CD4-positive, alpha-beta T cell (primary cell): ENCODE measurements at regions of chr15 and their contacts with region 1.

Region 1: DNA sequence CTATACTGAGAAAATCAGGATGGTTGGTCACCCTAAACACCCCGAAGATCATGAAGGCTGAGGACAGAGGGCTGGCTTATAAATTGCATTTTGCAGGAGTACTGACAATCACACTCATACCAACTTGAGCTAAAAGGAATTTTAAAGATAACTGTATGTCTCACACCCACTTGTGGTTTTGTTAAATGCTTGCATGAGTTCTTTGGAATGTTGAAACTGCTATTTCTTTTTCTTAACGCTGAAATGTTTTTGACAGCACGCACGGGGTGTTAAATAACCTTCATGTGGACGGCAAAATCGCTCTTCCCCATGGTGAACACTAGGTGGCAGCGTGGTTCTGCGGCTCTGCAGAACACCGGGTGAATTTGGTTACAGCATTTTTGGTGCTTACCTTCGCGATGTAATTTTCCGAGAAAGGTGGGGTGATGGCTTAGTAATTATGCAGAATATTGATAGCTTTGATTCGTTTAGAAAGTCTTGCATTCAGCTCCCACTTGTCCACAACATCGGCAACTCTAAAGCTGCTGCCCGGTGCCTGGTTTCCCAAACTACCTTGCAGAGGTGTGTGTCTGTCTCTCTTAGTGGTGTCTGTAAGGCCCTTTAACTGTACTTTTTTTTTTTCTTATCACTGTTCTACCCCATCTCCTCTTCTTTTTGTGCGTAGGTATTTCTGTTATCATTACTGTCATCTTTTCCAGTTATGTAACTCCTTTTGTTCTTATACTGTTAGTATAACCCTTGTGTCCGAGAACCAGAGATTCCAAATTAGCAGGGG is 51.7 kb downstream of the ARNT2 start:
- DNase-seq: peak; percentile 17 to 81 (median 31)
- ATAC-seq: peak; percentile 64
- H3K4me3 ChIP-seq: no peak overlapping the region
- H3K4me3 Mint-ChIP-seq: no peak overlapping the region
- H3K27ac ChIP-seq: no peak overlapping the region
- H3K27ac Mint-ChIP-seq: no peak overlapping the region
- H3K4me1 ChIP-seq: peaks cover 2% of the 10 kb centered on the region
- H3K4me1 Mint-ChIP-seq: peaks cover 7% of the 10 kb centered on the region
- H3K27me3 ChIP-seq: peaks cover 0 to 11% of the 10 kb centered on the region in 2 experiments
- H3K27me3 Mint-ChIP-seq: peaks cover 23% of the 10 kb centered on the region
- CTCF ChIP-seq: peak; percentile 83

Region 2: GRCh38 chr15:80776420-80777045 is 320.7 kb after region 1 on chr15:
- CTCF ChIA-PET with region 1: interaction called, 11 read pairs
- POLR2A ChIA-PET with region 1: no interaction called
- intact Hi-C with region 1: loop called (anchors 1 kb)
- DNase-seq: peak; percentile 16 to 78 (median 41)
- ATAC-seq: no peak
- H3K4me3 ChIP-seq: no peak overlapping the region
- H3K4me3 Mint-ChIP-seq: no peak overlapping the region
- H3K27ac ChIP-seq: no peak overlapping the region
- H3K27ac Mint-ChIP-seq: no peak overlapping the region
- H3K4me1 ChIP-seq: peaks cover 16% of the 10 kb centered on the region
- H3K4me1 Mint-ChIP-seq: no peaks in the 10 kb centered on the region
- H3K27me3 ChIP-seq: peaks cover 31 to 47% of the 10 kb centered on the region in 2 experiments
- H3K27me3 Mint-ChIP-seq: peaks cover 52% of the 10 kb centered on the region
- CTCF ChIP-seq: peak; percentile 75

Region 3: GRCh38 chr15:80970018-80970658 is 514.3 kb after region 1 on chr15:
- CTCF ChIA-PET with region 1: interaction called, 11 read pairs
- POLR2A ChIA-PET with region 1: no interaction called
- intact Hi-C with region 1: loop called (anchors 1 kb)
- DNase-seq: peak; percentile 32 to 81 (median 48)
- ATAC-seq: peak; percentile 69
- H3K4me3 ChIP-seq: no peak overlapping the region
- H3K4me3 Mint-ChIP-seq: no peak overlapping the region
- H3K27ac ChIP-seq: no peak overlapping the region
- H3K27ac Mint-ChIP-seq: no peak overlapping the region
- H3K4me1 ChIP-seq: peaks cover 5% of the 10 kb centered on the region
- H3K4me1 Mint-ChIP-seq: peaks cover 19% of the 10 kb centered on the region
- H3K27me3 ChIP-seq: no peaks in the 10 kb centered on the region
- H3K27me3 Mint-ChIP-seq: no peaks in the 10 kb centered on the region
- CTCF ChIP-seq: peak; percentile 96